WTC11 (cell line): ENCODE measurements at regions of chr2 and their contacts with region 1.

Region 1: GRCh38 chr2:153770359-153770991 is 101.2 kb upstream of the GALNT13 start:
- DNase-seq: no peak
- ATAC-seq: peak; percentile 99
- H3K4me3 Mint-ChIP-seq: no peak overlapping the region
- H3K27ac Mint-ChIP-seq: no peak overlapping the region
- H3K4me1 Mint-ChIP-seq: no peaks in the 10 kb centered on the region
- H3K27me3 Mint-ChIP-seq: no peaks in the 10 kb centered on the region
- CTCF ChIP-seq: peak; percentile 46

Region 2: GRCh38 chr2:153819501-153819900 is 49.0 kb after region 1 on chr2:
- CTCF ChIA-PET with region 1: interaction called, 10 read pairs
- POLR2A ChIA-PET with region 1: no interaction called
- DNase-seq: peak; percentile 14
- ATAC-seq: peak; percentile 99
- H3K4me3 Mint-ChIP-seq: no peak overlapping the region
- H3K27ac Mint-ChIP-seq: no peak overlapping the region
- H3K4me1 Mint-ChIP-seq: no peaks in the 10 kb centered on the region
- H3K27me3 Mint-ChIP-seq: no peaks in the 10 kb centered on the region
- CTCF ChIP-seq: no peak

Region 3: DNA sequence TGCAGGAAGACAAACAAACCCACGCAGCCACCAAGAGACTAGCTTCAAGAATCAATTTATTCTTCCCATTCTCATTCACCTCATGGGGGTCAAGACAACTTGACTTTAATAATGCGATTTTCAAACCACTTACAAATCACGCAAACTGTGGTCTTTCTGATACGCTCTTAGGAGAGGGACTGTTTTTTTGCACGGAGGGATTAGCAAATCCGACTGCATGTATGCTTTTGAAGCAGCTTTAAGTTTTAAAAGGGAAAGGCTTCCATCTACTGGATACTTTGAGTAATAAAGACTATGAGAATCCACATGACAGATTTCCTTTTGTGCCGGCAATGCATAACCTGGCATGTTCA is 605.1 kb after region 1 on chr2:
- CTCF ChIA-PET with region 1: interaction called, 13 read pairs
- POLR2A ChIA-PET with region 1: no interaction called
- DNase-seq: no peak
- ATAC-seq: peak; percentile 82
- H3K4me3 Mint-ChIP-seq: no peak overlapping the region
- H3K27ac Mint-ChIP-seq: no peak overlapping the region; the same call in 1 of the 2 replicates
- H3K4me1 Mint-ChIP-seq: peaks cover 30% of the 10 kb centered on the region
- H3K27me3 Mint-ChIP-seq: no peaks in the 10 kb centered on the region
- CTCF ChIP-seq: peak; percentile 24; the same call in 1 of the 2 replicates